Posterior cingulate gyrus (tissue), 11 donors: ENCODE measurements at regions of chr3 and their contacts with region 1.

Region 1: DNA sequence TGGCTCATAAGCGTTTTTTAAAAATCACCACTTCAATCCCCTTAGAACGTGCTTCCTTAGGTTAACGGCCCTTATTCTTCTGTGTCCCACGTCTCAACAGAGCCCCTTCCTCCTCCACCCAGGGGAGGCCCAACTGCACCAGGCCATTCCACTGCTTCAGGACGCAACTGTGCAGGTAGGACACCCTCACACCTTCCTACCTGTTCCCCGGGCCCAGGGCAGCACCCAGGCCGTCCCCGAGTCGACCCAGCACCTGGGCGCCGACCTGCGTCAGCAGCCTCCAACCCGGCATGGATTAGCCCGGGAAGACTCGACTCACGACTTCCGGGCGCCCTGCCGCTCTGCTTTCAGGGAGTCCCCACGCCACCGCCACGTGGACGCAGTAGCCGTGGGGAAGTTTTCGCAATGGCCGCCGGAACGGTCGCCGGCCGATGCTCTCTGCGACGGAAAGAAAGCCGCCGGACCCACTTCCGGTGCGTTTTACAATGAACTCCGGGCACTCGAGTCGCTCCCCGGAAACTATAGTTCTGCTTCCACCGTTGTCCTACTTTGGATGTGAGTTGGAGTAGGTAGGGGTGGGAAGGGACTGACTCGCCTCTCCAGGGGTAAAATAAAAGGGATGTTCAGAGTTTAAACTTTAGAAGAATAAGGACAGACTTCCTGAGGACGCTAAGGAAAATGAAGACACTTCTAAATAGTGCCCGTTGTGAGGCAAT is at the start of gene MRPL3:
- DNase-seq: peak; percentile 76 to 97 (median 88)

Region 2: DNA sequence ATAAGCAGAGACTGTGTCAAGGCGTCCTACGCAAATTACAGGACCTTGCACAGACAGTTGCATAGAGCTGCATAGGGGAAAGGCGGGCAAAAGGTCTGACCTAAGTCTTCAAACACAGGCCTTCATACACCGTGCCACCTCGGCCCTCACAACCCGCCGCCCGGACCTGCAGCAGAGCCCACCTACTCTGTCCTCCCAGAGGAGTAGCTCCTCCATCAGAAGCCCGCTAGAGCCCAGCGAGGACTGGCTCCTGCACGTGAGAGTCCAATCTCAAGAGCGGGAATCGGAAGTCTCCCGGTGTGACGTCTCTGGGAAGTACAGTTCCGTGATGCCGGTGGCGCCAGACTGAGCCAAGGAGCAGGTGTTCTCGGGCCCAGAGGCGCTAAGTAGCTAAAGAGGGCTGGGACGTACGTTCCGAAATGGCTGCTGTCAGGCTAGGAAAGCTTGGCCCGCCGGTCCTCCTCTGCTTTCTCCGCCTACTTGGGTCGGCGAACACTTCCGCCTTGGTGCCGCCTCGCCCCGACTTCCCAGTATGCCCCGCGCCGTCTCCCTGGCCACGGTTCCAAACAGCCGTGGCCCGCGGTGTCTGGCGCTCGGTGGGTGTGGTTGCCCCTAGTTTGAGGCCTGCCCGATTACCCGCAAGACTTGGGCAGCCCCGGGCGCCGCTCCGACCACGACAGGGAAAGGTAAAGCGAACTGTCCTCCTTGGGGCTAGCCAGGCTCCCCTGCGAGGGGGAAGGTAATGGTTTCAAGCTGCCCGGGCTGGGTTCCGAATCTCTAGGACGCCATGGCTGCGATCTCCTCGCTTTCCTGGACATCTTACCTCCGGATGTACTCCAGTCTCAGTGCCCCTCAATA is 476.1 kb before region 1 on chr3 and contains the starts of genes ASTE1 and NEK11:
- intact Hi-C with region 1: loop called (anchors 5 kb)
- DNase-seq: peak; percentile 83 to 98 (median 90)

Region 3: DNA sequence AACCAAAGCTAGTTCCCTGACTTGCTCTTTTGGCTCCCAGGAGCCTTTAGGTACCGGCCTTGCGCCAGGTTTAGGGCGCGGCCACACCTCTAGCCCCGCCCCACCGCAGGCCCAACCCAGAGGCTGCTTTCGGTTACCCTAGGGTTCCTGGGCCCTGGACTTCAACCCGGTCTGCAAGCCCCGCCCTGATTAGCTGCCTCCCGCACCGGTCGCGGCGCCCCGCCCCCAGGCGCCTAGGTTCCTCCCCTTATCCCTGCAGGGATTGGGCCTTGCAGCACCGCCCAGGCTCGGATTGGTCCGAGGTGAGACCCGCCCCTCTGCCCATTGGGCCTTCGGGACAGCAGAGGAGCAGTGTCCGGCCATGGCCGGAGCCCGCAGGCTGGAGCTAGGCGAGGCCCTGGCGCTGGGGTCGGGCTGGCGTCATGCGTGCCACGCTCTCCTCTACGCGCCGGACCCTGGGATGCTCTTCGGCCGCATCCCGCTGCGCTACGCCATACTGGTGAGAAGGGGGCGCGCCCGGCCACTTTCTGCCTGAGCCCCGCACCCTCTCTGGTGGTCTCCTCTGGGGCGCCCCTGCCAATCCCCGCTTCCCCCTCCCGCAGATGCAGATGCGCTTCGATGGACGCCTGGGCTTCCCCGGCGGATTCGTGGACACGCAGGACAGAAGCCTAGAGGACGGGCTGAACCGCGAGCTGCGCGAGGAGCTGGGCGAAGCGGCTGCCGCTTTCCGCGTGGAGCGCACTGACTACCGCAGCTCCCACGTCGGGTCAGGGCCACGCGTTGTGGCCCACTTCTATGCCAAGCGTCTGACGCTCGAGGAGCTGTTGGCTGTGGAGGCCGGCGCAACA is 121.0 kb before region 1 on chr3 and contains the start of gene NUDT16:
- intact Hi-C with region 1: loop called (anchors 5 kb)
- DNase-seq: peak; percentile 97 to 100 (median 98)